Head of caudate nucleus (tissue), 42 donors: ENCODE measurements at regions of chr18 and their contacts with region 1.

Region 1: GRCh38 chr18:35132021-35132902 is 91.0 kb downstream of the MAPRE2 start:
- DNase-seq: peak in 2 of 42 donors; percentile 14 to 56

Region 2: DNA sequence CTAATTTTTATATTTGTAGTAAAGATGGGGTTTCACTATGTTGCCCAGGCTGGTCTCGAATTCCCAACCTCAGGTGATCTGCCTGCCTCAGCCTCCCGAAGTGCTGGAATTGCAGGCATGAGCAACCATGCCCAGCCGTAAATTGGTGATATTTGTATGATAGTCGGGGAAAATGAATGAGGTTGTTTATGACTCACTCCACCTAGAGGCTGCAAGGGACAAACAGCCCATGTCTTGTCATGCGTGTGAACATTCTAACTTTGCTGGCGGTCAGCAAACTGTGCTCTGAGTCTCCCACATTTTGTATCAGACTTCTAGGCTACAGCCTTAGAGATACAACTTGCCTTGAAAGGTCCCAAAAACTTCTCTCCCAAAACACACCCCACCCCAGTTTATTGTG is 555.6 kb before region 1 on chr18:
- intact Hi-C with region 1: no loop called
- DNase-seq: no peak

Region 3: GRCh38 chr18:34871435-34871834 is 260.8 kb before region 1 on chr18:
- intact Hi-C with region 1: loop called (anchors 10 kb)
- DNase-seq: peak in 1 of 42 donors; percentile 50

Region 4: DNA sequence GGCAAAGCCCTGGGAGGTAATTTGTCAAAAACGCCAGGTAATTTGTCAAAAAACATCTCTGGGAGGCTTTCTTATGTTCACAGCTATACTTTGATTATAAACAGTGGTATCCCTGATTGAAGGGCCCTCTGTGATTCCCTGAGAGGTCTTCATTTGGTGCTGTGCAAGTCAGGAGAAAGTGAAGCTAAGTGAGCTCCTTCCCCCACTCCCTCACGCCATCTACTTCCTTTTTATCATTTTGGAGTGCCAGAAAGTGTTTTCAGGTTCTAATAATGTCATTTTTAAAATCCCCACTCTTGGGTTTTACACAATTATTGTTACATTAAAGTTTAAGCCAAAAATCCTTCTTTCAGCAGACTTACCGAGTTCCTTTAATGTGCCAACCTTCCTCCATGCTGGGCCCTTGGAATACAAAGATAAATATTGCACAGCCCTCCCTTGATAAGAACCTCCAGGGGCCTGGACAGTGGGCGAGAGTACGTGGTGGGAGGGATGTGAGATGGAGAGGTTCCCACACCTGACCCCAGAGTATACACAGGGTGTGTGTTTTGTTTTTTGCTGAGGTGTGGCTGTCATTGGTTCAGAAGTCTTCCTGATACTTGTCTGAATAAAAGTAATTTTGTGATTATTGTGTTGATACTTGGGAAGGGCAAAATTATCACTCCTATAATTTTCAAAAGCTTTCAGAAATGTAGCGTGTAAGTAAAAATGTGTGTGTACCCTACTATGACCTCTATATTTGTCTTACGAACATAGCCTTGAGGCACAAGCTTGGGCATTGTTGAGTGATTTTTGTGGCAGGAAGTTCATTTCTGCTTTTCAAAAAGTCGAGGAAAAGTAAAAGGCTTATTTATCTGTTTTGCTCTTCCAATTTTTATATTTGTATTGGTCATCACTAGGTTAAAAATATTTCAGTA is 82.9 kb before region 1 on chr18:
- intact Hi-C with region 1: loop called (anchors 5 kb)
- DNase-seq: no peak